Thyroid gland (tissue), 4 donors: ENCODE measurements at regions of chr12 and their contacts with region 1.

Region 1: DNA sequence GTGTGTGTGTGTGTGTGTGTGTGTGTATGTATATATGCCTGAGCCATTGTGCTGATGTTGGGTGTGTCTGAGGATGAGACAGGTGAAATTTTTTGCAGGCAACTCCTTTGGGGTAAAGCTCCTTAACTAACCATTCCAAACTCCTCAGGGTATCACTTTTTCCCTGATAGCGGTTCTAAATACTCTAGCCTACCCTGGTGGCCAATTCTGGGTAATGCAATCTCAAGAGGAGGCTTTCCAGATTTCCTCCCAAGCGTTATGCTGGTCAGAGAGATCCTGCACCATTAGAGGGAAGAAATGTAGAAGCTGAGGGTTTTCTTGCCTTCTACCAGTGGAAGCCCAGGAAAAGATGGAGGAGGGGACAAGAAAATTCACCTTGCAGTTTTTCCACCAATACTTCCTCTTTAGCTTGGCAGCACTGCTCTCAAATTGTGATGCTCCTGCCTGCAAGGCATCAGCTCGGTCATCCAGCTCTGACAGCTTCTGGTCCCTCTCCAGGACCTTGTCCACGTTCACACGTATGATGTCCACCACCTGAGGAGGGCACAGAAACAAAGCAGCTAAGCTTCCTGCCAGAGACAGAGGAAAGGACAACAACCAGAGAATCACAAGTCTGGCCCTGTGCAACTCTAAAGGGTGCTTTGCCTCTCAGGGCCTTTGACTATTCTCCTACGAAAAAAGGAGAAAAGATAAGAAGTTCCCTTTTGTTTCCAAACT is 4.9 kb downstream of the VAMP1 start:
- DNase-seq: peak; percentile 60 to 62
- H3K4me3 ChIP-seq: no peak overlapping the region
- H3K27ac ChIP-seq: no peak overlapping the region
- H3K4me1 ChIP-seq: peaks cover 7 to 21% of the 10 kb centered on the region in 2 donors
- H3K27me3 ChIP-seq: no peaks in the 10 kb centered on the region
- CTCF ChIP-seq: peak; percentile 65 to 98 (median 90)
- POLR2A ChIP-seq: no peak

Region 2: GRCh38 chr12:6267139-6267721 is 198.4 kb before region 1 on chr12:
- intact Hi-C with region 1: no loop called
- DNase-seq: peak; percentile 57 to 61
- H3K4me3 ChIP-seq: no peak overlapping the region
- H3K27ac ChIP-seq: peak overlapping the region; percentile 86 to 94 (median 93)
- H3K4me1 ChIP-seq: peaks cover 33 to 65% of the 10 kb centered on the region in 2 donors
- H3K27me3 ChIP-seq: no peaks in the 10 kb centered on the region
- CTCF ChIP-seq: peak in 1 of 6 experiments; percentile 4
- POLR2A ChIP-seq: peak in 1 of 2 donors; percentile 40

Region 3: DNA sequence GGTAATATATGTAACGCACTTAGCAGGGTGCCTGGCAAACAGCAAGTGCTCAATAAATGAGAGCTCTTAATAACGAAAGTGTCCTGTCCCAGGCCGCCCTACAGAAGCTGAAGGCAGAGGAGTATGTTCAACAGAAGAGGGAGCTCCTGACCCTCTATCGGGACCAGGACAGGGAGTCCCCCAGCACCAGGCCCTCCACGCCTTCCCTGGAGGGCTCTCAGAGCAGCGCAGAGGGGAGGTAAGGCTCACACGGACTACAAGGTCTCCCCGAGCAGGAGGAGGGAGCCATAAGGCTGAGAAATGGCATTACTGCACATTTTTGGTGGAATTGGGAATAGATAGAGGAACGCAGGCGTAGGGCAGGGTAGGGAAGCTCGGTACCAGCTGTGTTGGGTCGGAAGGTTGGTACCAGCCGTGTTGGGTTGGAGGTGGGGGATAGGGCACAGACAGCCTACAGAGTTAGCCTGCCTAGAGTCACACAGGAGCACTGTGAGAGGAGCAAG is 139.2 kb before region 1 on chr12:
- intact Hi-C with region 1: loop called (anchors 5 kb)
- DNase-seq: peak in 1 of 2 donors; percentile 35
- H3K4me3 ChIP-seq: no peak overlapping the region
- H3K27ac ChIP-seq: peak overlapping the region in 2 of 3 donors; percentile 54 to 84
- H3K4me1 ChIP-seq: peaks cover 9 to 69% of the 10 kb centered on the region in 2 donors
- H3K27me3 ChIP-seq: no peaks in the 10 kb centered on the region
- CTCF ChIP-seq: peak in 4 of 6 experiments; percentile 8 to 37 (median 32)
- POLR2A ChIP-seq: no peak

Region 4: DNA sequence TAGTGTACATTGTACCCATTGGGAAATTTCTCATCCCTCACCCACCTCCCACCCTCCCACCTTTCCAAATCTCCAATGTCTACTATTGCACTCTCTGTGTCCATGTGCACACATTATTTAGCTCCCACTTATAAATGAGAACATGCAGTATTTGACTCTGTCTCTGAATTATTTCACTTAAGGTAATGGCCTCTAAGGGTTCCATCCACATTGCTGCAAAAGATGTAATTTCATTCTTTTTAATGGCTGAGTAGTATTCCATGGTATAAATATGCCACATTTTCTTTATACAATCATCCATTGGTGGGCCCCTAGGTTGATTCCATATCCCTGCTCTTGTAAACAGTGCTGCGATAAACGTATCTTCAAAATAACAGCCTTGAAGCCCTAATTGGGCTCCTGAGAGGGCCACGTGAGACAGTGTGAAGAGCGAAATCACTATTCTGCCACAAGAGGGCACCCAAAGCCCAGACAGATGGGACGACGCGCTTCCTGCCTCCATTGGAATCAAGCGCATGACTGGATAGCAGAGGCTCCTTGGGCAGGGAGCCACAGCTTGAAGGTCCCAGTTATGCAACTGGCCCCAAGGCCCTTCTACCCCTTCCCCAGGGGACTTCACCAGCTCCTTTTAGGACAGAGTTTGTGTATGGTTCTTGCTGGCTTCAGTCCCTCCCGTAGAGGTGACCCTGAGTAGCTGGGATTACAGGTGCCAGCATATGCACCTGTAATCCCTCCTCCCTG is 42.2 kb before region 1 on chr12:
- intact Hi-C with region 1: loop called (anchors 2 kb)
- DNase-seq: peak; percentile 93 to 94
- H3K4me3 ChIP-seq: no peak overlapping the region
- H3K27ac ChIP-seq: peak overlapping the region; percentile 48 to 82 (median 64)
- H3K4me1 ChIP-seq: peaks cover 18 to 29% of the 10 kb centered on the region in 2 donors
- H3K27me3 ChIP-seq: no peaks in the 10 kb centered on the region
- CTCF ChIP-seq: peak; percentile 52 to 99 (median 90)
- POLR2A ChIP-seq: no peak

Region 5: GRCh38 chr12:6662906-6663742 is 197.5 kb after region 1 on chr12 and contains the start of gene ING4:
- intact Hi-C with region 1: no loop called
- DNase-seq: peak; percentile 98 to 99
- H3K4me3 ChIP-seq: peak within 1 kb of the TSS; percentile 30 to 61 (median 51)
- H3K27ac ChIP-seq: peak within 1 kb of the TSS; percentile 41 to 71 (median 48)
- H3K4me1 ChIP-seq: peaks cover 9 to 10% of the 10 kb centered on the region in 2 donors
- H3K27me3 ChIP-seq: no peaks in the 10 kb centered on the region
- CTCF ChIP-seq: no peak
- POLR2A ChIP-seq: peak in 1 of 2 donors; percentile 45
- total RNA-seq, gene ING4: 52.7 to 85.1 (median 67.2) TPM